ENCODE measurements at regions of chr7 and their contacts with region 1.

Region 1: GRCh38 chr7:155653803-155654202 is 9.3 kb downstream of the RBM33 start:
- DNase-seq: no peak
- ATAC-seq: peak; percentile 41

Region 2: DNA sequence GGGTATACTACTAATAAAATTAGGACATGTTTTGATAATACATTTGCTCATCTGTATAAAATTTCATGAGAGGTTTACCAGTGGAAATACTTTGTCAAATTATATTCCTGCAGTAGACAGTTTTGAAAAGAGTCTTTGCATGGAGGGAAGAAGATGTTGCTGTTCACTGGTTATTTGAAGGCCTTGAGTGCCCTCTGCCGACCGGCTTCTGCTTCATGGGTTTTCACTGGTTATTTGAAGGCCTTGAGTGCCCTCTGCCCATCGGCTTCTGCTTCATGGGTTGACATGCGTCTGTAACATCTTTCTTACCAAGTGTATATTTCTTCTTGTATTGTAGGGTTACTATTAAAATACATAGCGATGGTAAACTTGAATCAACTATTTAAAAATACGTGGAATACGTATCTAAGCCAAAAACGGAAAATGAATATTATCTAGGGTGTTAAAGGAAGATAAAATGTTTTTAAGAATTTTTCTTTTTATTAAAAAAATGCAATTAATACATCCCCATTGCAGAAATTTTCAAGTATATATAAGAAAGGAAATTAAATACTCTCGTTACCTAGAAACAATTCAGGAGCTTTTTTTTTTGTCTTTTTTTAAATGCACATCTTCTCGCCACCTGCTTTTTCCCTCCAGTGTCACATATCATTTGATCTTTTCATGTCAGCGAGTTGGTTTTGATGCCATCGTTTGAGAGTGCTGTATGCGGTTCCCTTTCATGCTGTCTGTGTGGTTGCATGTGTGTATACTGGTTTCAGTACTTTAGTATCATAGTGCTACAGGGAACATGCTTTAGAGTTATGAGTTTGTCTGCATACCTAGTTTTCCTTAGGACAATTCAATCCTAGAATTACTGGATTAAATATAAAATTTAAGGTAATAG is 85.1 kb after region 1 on chr7:
- intact Hi-C with region 1: loop called (anchors 10 kb)
- DNase-seq: peak; percentile 88
- ATAC-seq: peak; percentile 67